CD4-positive, alpha-beta memory T cell (primary cell): ENCODE measurements at regions of chr6 and their contacts with region 1.

Region 1: DNA sequence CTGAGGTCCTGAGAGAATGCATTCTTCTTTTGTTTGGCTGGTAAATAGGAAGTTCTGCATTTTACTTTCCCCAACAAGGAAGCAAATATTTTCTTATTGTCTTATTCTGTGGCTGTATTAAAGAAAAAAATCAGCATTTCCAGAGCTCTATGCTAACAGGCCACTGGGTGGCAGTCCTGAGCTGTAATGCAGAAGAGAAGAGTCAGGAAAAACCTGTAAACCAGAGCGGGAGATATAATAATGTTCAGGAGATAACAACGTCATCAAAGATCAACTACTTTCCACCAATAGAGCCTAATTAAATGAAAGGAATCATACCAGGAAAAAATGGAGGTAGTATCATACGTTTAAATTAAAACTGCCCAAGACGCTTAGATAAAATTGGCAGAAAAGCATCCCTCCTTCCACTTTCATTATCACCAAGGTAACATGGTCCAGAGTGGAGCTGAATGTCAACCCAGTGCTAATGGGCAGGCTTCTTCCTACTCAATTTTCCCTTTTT is 55.6 kb upstream of the CARMIL1 start:
- DNase-seq: peak; percentile 50 to 56 (median 54)
- H3K4me3 ChIP-seq: no peak overlapping the region
- H3K4me3 Mint-ChIP-seq: peak overlapping the region; percentile 40 to 74 (median 56)
- H3K27ac ChIP-seq: no peak overlapping the region
- H3K27ac Mint-ChIP-seq: peak overlapping the region in 2 of 7 donors; percentile 1 to 4
- H3K4me1 ChIP-seq: peaks cover 5% of the 10 kb centered on the region
- H3K4me1 Mint-ChIP-seq: peaks cover 2 to 9% (median 7%) of the 10 kb centered on the region in 4 donors
- H3K27me3 ChIP-seq: no peaks in the 10 kb centered on the region
- H3K27me3 Mint-ChIP-seq: peaks cover 3 to 6% of the 10 kb centered on the region in 2 donors

Region 2: DNA sequence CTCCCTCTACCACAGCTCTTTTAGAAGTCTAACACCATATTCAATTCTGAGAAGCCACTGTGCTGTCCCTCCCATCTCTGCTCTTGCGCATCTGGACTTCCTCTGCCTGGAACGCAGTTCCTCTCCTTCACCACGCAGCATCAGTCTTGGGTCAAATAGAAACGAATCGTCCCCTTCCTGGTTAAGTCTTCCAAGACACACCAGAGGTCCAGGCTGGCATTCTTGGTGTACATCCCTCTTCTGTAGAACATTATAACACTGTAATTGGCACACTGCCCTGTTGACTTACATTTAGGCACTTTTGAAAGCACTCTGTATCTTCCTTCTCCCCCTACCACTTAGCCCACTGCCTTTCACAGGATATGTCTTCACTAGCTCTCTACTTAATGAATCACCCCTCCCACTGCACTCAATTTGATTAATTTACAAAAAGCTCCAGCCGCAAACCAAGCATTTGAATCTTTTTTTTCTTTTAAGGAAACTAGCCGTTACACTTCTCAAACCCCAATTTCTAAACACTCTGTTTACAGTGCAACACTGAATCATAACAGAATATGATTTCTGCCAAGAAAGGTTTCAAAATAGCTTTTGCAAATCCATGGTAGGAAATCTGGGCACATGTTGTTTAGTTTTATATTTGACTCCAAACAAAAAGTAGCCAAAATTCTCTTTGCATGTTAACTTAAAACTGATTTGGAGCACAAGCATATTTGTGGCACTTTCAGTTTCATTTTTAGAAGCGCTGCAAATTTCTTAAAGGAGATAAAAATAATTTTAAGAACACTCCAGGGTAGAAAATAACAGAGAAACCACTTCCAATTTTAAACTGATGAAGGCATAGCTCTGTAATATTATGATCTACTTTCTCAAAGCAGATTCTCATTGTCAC is 85.1 kb before region 1 on chr6:
- CTCF ChIA-PET with region 1: interaction called, 4 read pairs
- POLR2A ChIA-PET with region 1: interaction called, 3 read pairs
- intact Hi-C with region 1: loop called (anchors 5 kb)
- DNase-seq: peak; percentile 60 to 75 (median 70)
- H3K4me3 ChIP-seq: peak overlapping the region; percentile 57 to 65
- H3K4me3 Mint-ChIP-seq: peak overlapping the region; percentile 87 to 97 (median 90)
- H3K27ac ChIP-seq: peak overlapping the region; percentile 52
- H3K27ac Mint-ChIP-seq: peak overlapping the region; percentile 86 to 96 (median 94)
- H3K4me1 ChIP-seq: peaks cover 42% of the 10 kb centered on the region
- H3K4me1 Mint-ChIP-seq: peaks cover 20 to 44% (median 30%) of the 10 kb centered on the region in 4 donors
- H3K27me3 ChIP-seq: no peaks in the 10 kb centered on the region
- H3K27me3 Mint-ChIP-seq: no peaks in the 10 kb centered on the region

Region 3: GRCh38 chr6:25601800-25602673 is 378.5 kb after region 1 on chr6:
- CTCF ChIA-PET with region 1: interaction called, 6 read pairs
- POLR2A ChIA-PET with region 1: no interaction called
- intact Hi-C with region 1: loop called (anchors 1 kb)
- DNase-seq: peak in 4 of 5 donors; percentile 35 to 46 (median 40)
- H3K4me3 ChIP-seq: no peak overlapping the region
- H3K4me3 Mint-ChIP-seq: no peak overlapping the region
- H3K27ac ChIP-seq: no peak overlapping the region
- H3K27ac Mint-ChIP-seq: no peak overlapping the region
- H3K4me1 ChIP-seq: no peaks in the 10 kb centered on the region
- H3K4me1 Mint-ChIP-seq: peaks cover 0 to 1% (median 0%) of the 10 kb centered on the region in 4 donors
- H3K27me3 ChIP-seq: no peaks in the 10 kb centered on the region
- H3K27me3 Mint-ChIP-seq: no peaks in the 10 kb centered on the region

Region 4: DNA sequence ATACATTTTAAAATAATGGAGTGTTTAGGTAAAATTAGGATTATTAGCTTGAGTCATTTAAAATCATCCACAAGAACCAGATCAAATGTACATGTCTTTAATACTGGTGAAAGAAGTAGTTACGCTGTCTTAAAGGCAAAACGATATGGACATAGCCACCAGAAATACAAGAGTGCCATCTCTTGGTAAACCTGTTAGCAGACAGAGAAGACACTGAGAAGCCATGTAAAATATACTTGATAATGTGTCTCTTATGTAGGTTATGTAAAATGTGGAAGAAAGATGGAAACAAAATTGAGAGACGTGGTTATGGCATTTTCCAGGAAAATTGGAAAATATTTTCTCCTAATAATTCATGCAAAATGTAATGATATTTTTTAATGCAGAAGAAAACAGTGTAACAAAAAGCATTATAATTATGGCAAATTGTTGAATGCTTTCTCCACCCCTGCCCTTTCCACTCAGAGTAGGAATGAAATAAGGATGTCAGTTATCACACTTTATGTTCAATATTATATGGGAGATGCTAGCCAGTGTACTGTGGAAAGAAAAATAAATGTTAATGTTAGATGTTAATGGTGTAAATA is 719.1 kb after region 1 on chr6:
- CTCF ChIA-PET with region 1: interaction called, 4 read pairs
- POLR2A ChIA-PET with region 1: no interaction called
- intact Hi-C with region 1: loop called (anchors 5 kb)
- DNase-seq: peak in 4 of 5 donors; percentile 27 to 40 (median 32)
- H3K4me3 ChIP-seq: no peak overlapping the region
- H3K4me3 Mint-ChIP-seq: no peak overlapping the region
- H3K27ac ChIP-seq: no peak overlapping the region
- H3K27ac Mint-ChIP-seq: no peak overlapping the region
- H3K4me1 ChIP-seq: peaks cover 9% of the 10 kb centered on the region
- H3K4me1 Mint-ChIP-seq: peaks cover 8 to 21% (median 15%) of the 10 kb centered on the region in 4 donors
- H3K27me3 ChIP-seq: no peaks in the 10 kb centered on the region
- H3K27me3 Mint-ChIP-seq: peaks cover 0 to 2% of the 10 kb centered on the region in 2 donors

Region 5: DNA sequence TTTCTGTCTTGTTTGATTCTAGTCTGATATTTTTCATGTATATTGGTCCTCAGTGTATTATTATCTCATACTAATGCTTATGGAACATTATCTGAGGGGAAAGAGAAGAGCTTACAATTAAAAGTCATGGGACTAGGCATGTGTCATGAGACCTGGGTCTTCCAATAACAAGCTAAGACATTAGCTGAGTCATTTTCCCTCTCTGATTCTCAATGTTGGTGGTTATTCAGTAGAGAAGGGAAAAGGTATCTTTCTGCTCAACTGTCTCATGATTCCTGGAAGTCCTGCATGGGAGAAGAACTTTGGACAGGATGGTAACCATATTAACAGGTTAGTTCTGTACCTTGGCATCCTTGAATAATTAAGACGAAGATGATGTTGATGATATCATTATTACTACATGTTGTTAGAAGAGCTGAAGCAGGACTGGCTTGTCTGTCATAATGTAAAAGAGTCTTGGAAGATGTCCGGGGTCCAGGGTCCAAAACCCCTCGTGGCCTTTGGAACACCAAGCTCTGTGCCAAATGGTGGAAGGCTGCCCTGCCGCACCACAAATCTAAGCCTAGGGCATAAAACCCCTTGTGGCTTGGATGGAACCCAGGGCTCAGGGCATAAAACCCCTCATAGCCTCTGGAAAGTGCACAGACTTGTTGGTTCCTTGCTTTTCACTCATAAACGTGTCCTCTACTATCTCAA is 758.2 kb after region 1 on chr6:
- CTCF ChIA-PET with region 1: no interaction called
- POLR2A ChIA-PET with region 1: no interaction called
- intact Hi-C with region 1: no loop called
- DNase-seq: no peak
- H3K4me3 ChIP-seq: no peak overlapping the region
- H3K4me3 Mint-ChIP-seq: no peak overlapping the region
- H3K27ac ChIP-seq: no peak overlapping the region
- H3K27ac Mint-ChIP-seq: peak overlapping the region in 5 of 7 donors; percentile 11 to 86 (median 67)
- H3K4me1 ChIP-seq: peaks cover 4% of the 10 kb centered on the region
- H3K4me1 Mint-ChIP-seq: peaks cover 2 to 12% (median 8%) of the 10 kb centered on the region in 4 donors
- H3K27me3 ChIP-seq: no peaks in the 10 kb centered on the region
- H3K27me3 Mint-ChIP-seq: no peaks in the 10 kb centered on the region